ENCODE measurements at regions of chr17 and their contacts with region 1.

Region 1: GRCh38 chr17:51908840-51909537 is 249.5 kb downstream of the CA10 start:
- DNase-seq: no peak
- ATAC-seq: no peak
- H3K4me3 ChIP-seq: no peak overlapping the region
- H3K27ac ChIP-seq: no peak overlapping the region
- H3K4me1 ChIP-seq: no peaks in the 10 kb centered on the region
- H3K27me3 ChIP-seq: peaks cover 0 to 12% (median 0%) of the 10 kb centered on the region in 9 donors
- CTCF ChIP-seq: no peak
- POLR2A ChIP-seq: no peak

Region 2: DNA sequence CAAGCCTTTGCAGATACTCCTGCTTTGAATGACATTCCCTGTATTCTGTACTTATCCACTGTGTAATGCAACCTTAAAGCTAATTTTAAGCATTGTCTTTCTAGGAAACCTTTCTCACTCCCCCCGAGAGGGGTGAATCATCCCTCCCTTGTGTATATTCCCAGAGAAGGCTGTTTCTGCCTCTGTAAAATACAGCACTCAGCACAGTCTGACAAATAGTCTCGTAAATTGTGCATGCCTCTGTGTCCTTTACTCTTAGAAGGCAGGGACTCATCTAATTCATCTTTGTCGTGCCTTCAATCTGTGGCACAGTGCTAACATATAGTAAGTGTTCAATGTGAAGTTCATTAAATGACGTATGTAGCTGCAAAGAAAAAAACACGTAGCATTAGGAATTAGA is 48.8 kb after region 1 on chr17:
- intact Hi-C with region 1: loop called in 2 of 10 experiments (anchors 5 to 10 kb)
- DNase-seq: no peak
- ATAC-seq: no peak
- H3K4me3 ChIP-seq: no peak overlapping the region
- H3K27ac ChIP-seq: no peak overlapping the region
- H3K4me1 ChIP-seq: no peaks in the 10 kb centered on the region
- H3K27me3 ChIP-seq: no peaks in the 10 kb centered on the region
- CTCF ChIP-seq: no peak
- POLR2A ChIP-seq: no peak

Measured in heart left ventricle (tissue), 16 donors.